Activated CD4-positive, alpha-beta memory T cell treated with anti-CD3 and anti-CD28 coated beads for 36 hours (primary cell): ENCODE measurements at regions of chr1 and their contacts with region 1.

Region 1: GRCh38 chr1:160675641-160676410 is 29.0 kb upstream of the SLAMF1 start:
- DNase-seq: peak; percentile 88
- H3K4me3 Mint-ChIP-seq: no peak overlapping the region
- H3K27ac Mint-ChIP-seq: peak overlapping the region; percentile 76
- H3K4me1 Mint-ChIP-seq: peaks cover 49% of the 10 kb centered on the region
- H3K27me3 Mint-ChIP-seq: no peaks in the 10 kb centered on the region

Region 2: GRCh38 chr1:160428655-160429054 is 247.2 kb before region 1 on chr1:
- CTCF ChIA-PET with region 1: interaction called, 4 read pairs
- POLR2A ChIA-PET with region 1: interaction called, 4 read pairs
- intact Hi-C with region 1: loop called (anchors 5 kb)
- DNase-seq: peak; percentile 57
- H3K4me3 Mint-ChIP-seq: no peak overlapping the region
- H3K27ac Mint-ChIP-seq: peak overlapping the region; percentile 77
- H3K4me1 Mint-ChIP-seq: peaks cover 60% of the 10 kb centered on the region
- H3K27me3 Mint-ChIP-seq: no peaks in the 10 kb centered on the region

Region 3: GRCh38 chr1:160607011-160607671 is 68.7 kb before region 1 on chr1:
- CTCF ChIA-PET with region 1: interaction called, 29 read pairs
- POLR2A ChIA-PET with region 1: interaction called, 3 read pairs
- intact Hi-C with region 1: no loop called
- DNase-seq: peak; percentile 74
- H3K4me3 Mint-ChIP-seq: no peak overlapping the region
- H3K27ac Mint-ChIP-seq: peak overlapping the region; percentile 78
- H3K4me1 Mint-ChIP-seq: peaks cover 63% of the 10 kb centered on the region
- H3K27me3 Mint-ChIP-seq: no peaks in the 10 kb centered on the region

Region 4: DNA sequence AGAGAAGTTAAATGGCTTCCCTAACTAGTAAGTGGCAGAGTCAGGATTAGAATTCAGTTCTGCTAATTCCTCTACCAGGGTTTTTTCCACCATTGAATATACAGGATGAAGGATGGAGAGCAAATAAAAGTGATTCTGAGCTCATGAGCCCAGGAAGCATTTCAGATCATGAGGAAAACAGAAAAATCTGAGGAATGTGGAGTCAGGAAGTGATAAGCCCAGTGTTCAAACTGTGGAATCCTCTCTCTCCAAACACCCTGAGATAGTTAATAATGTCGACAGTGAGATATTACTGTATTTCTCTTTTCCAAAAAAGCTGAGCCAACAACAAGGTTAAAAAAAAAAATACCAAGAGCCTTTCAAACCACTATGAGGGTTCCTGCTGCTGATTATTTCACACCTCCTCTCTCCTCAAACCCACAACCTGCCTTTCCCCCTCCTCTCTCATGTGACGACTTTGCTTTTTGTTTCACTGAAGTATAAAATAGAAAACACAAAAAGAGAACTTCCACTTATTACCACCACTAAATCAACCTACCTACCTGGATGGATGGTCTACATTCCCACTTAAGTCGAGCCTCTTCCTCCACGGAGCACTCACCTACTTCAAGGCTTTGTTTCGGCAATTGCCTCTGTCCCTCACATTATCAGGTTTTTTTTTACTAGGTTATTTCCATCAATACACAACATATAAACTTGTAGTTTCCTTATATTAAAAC is 37.8 kb before region 1 on chr1:
- CTCF ChIA-PET with region 1: interaction called, 12 read pairs
- POLR2A ChIA-PET with region 1: interaction called, 81 read pairs
- intact Hi-C with region 1: no loop called
- DNase-seq: peak; percentile 64
- H3K4me3 Mint-ChIP-seq: peak overlapping the region; percentile 76
- H3K27ac Mint-ChIP-seq: peak overlapping the region; percentile 92
- H3K4me1 Mint-ChIP-seq: peaks cover 86% of the 10 kb centered on the region
- H3K27me3 Mint-ChIP-seq: no peaks in the 10 kb centered on the region

Region 5: DNA sequence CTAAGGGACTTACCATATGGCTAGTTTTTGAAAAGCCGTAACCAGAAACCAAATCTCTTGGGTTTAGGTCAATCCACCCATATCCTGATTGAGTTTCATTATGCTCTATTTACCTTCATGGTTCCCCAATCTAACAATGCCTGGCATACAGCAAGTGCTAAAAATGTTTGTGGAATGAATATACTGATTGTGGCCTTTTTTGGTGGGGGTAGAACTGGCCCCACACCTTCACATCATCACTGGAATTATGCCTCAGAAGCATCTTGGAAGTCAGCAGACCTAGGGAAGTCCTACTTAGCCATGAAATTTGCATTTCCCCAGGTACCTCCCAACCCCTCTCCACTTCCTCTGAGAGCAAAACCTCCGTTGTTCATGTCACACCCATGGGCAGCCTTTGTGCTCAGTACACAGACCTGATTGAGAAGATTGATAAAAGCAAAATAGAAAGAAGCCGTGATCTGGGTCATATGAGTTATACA is 11.2 kb before region 1 on chr1:
- CTCF ChIA-PET with region 1: interaction called, 18 read pairs
- POLR2A ChIA-PET with region 1: interaction called, 16 read pairs
- intact Hi-C with region 1: loop called (anchors 1 kb)
- DNase-seq: peak; percentile 70
- H3K4me3 Mint-ChIP-seq: peak overlapping the region; percentile 40
- H3K27ac Mint-ChIP-seq: peak overlapping the region; percentile 94
- H3K4me1 Mint-ChIP-seq: peaks cover 80% of the 10 kb centered on the region
- H3K27me3 Mint-ChIP-seq: no peaks in the 10 kb centered on the region

Region 6: GRCh38 chr1:160711602-160712311 is 35.9 kb after region 1 on chr1 and contains the start of gene CD48:
- CTCF ChIA-PET with region 1: interaction called, 51 read pairs
- POLR2A ChIA-PET with region 1: interaction called, 15 read pairs
- intact Hi-C with region 1: loop called (anchors 5 kb)
- DNase-seq: peak; percentile 65
- H3K4me3 Mint-ChIP-seq: no peak within 1 kb of the TSS
- H3K27ac Mint-ChIP-seq: no peak within 1 kb of the TSS
- H3K4me1 Mint-ChIP-seq: peaks cover 17% of the 10 kb centered on the region
- H3K27me3 Mint-ChIP-seq: no peaks in the 10 kb centered on the region
- total RNA-seq, gene CD48: 190 to 194 TPM

Region 7: GRCh38 chr1:160777486-160778089 is 101.8 kb after region 1 on chr1:
- CTCF ChIA-PET with region 1: interaction called, 30 read pairs
- POLR2A ChIA-PET with region 1: no interaction called
- intact Hi-C with region 1: no loop called
- DNase-seq: peak; percentile 58
- H3K4me3 Mint-ChIP-seq: no peak overlapping the region
- H3K27ac Mint-ChIP-seq: no peak overlapping the region
- H3K4me1 Mint-ChIP-seq: peaks cover 38% of the 10 kb centered on the region
- H3K27me3 Mint-ChIP-seq: no peaks in the 10 kb centered on the region